Activated CD4-positive, alpha-beta memory T cell treated with anti-CD3 and anti-CD28 coated beads for 36 hours (primary cell): ENCODE measurements at regions of chr12 and their contacts with region 1.

Region 1: DNA sequence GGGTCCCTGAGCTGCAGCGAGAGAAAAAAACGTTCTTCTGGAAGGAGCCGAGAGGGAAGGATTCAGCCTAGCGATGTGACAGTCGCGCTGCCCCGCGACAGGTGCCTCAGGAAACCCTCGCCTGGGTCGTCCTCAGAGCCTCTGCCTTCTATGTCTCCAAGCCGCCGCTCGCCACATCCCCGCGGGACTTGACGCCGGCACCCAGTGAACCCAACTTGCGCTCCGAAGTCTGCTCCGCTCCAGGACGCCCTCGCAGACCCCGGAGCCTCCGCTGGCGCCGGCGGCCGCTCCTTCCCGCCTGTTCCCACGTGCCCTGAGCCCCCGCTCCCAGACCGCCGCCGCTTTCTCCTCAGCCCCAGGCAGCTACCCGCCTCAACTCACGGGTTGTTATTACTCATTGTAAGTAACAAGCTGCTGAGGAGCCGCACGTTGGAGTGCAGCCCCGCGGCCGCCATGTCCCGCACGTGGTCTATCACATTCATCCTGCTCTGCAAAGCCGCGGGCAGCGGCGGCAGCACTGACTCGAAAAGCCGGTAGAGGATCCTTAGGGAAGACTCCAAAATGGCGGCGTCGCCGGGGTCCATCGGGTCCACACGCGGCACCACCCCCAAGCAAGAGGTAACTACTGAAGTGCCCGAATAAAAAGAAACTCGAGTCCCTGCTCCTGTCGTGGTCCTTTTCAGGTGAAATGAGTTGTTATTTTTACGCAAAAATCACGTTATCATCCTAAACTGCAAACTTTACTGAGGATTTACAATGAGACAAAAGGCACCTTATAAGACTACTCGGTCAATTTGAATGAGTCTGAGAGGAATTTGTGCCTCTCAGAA is at the start of gene ANAPC7:
- DNase-seq: peak; percentile 92
- H3K4me3 Mint-ChIP-seq: peak within 1 kb of the TSS; percentile 99
- H3K27ac Mint-ChIP-seq: peak within 1 kb of the TSS; percentile 99
- H3K4me1 Mint-ChIP-seq: peaks cover 23% of the 10 kb centered on the region
- H3K27me3 Mint-ChIP-seq: no peaks in the 10 kb centered on the region
- total RNA-seq, gene ANAPC7: 47.3 to 52.9 TPM

Region 2: GRCh38 chr12:109811624-109811995 is 591.8 kb before region 1 on chr12:
- CTCF ChIA-PET with region 1: no interaction called
- POLR2A ChIA-PET with region 1: no interaction called
- intact Hi-C with region 1: no loop called
- DNase-seq: no peak
- H3K4me3 Mint-ChIP-seq: no peak overlapping the region
- H3K27ac Mint-ChIP-seq: no peak overlapping the region
- H3K4me1 Mint-ChIP-seq: no peaks in the 10 kb centered on the region
- H3K27me3 Mint-ChIP-seq: no peaks in the 10 kb centered on the region

Region 3: DNA sequence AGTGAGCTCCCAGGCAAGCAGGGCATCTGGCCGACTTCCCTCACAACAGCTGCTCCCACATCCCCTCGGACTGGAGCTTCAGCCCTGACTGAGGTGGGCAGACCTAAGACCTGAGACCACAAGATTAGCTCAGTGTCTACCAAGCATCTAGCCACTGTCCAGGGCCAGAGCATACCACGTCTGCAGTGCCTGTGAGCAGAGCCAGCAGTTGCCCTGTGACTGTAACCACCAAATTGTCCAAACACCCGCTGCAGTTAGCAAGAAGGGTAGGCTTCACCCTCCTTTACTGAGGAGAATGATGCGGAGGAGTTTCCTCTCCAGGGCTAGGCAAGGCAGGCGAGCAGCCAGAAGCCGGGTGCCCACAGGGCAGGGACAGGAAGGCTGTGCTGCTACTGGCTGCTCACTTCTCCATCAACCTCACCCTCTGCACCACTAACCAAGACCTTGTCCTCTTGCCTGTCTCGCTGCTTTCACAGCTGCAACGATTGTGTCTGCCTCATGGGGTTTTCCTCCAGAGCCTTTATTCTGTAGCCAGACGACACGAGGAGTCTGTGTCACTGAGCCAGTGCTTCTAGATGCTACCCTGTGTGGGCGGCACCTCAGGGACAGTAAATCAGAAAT is 53.7 kb before region 1 on chr12:
- CTCF ChIA-PET with region 1: interaction called, 3 read pairs
- POLR2A ChIA-PET with region 1: no interaction called
- intact Hi-C with region 1: loop called (anchors 5 kb)
- DNase-seq: peak; percentile 69
- H3K4me3 Mint-ChIP-seq: no peak overlapping the region
- H3K27ac Mint-ChIP-seq: peak overlapping the region; percentile 60
- H3K4me1 Mint-ChIP-seq: peaks cover 29% of the 10 kb centered on the region
- H3K27me3 Mint-ChIP-seq: no peaks in the 10 kb centered on the region

Region 4: DNA sequence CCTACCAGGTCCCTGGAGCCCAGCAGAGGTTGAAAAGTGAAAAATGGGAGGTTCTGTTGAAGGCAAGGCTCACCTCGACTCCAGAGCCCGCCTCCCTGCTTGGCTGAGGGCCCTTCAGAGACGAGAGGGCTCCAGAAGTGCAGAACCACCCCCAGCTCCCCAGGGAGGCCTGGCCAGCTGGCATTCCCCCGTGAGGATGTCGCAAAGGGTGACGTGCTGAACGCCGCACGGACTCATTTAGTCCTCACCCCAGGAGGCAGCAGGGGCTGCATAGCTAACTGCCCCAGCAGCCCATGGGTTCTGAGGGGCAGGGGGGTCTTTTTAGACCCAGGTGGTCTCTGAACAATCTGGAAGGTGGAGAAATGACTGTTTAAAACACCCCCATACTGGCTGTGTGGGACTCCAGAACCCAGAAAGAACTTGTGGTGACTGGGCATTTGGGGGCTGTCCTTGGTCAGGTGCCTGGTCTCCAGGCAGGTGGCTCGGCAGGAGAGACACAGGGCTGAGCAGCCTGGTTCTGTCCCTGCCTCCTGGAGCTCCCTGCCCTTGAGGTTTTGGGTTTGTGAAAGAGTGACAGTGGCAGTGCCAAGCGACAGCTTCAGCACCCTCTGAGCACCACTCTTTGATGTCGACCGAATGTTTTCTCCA is 31.8 kb before region 1 on chr12:
- CTCF ChIA-PET with region 1: no interaction called
- POLR2A ChIA-PET with region 1: no interaction called
- intact Hi-C with region 1: no loop called
- DNase-seq: no peak
- H3K4me3 Mint-ChIP-seq: no peak overlapping the region
- H3K27ac Mint-ChIP-seq: no peak overlapping the region
- H3K4me1 Mint-ChIP-seq: no peaks in the 10 kb centered on the region
- H3K27me3 Mint-ChIP-seq: no peaks in the 10 kb centered on the region

Region 5: GRCh38 chr12:110449799-110450497 is 46.6 kb after region 1 on chr12 and contains the start of gene ARPC3:
- CTCF ChIA-PET with region 1: interaction called, 10 read pairs
- POLR2A ChIA-PET with region 1: no interaction called
- intact Hi-C with region 1: no loop called
- DNase-seq: peak; percentile 97
- H3K4me3 Mint-ChIP-seq: peak within 1 kb of the TSS; percentile 100
- H3K27ac Mint-ChIP-seq: peak within 1 kb of the TSS; percentile 99
- H3K4me1 Mint-ChIP-seq: peaks cover 35% of the 10 kb centered on the region
- H3K27me3 Mint-ChIP-seq: no peaks in the 10 kb centered on the region
- total RNA-seq, gene ARPC3: 340 to 352 TPM